ENCODE measurements at regions of chr2 and their contacts with region 1.

Region 1: GRCh38 chr2:106104332-106105062 is 89.6 kb downstream of the UXS1 start:
- DNase-seq: peak in 41 of 42 donors; percentile 15 to 84 (median 63)

Region 2: GRCh38 chr2:105888625-105889400 is 215.7 kb before region 1 on chr2:
- intact Hi-C with region 1: no loop called
- DNase-seq: peak in 1 of 42 donors; percentile 29

Region 3: GRCh38 chr2:105919826-105920225 is 184.7 kb before region 1 on chr2:
- intact Hi-C with region 1: no loop called
- DNase-seq: peak in 1 of 42 donors; percentile 34

Region 4: GRCh38 chr2:106572541-106573450 is 468.3 kb after region 1 on chr2:
- intact Hi-C with region 1: loop called (anchors 10 kb)
- DNase-seq: peak in 34 of 42 donors; percentile 11 to 71 (median 48)